Activated CD4-positive, alpha-beta T cell treated with anti-CD3 and anti-CD28 coated beads for 36 hours (primary cell): ENCODE measurements at regions of chr16 and their contacts with region 1.

Region 1: DNA sequence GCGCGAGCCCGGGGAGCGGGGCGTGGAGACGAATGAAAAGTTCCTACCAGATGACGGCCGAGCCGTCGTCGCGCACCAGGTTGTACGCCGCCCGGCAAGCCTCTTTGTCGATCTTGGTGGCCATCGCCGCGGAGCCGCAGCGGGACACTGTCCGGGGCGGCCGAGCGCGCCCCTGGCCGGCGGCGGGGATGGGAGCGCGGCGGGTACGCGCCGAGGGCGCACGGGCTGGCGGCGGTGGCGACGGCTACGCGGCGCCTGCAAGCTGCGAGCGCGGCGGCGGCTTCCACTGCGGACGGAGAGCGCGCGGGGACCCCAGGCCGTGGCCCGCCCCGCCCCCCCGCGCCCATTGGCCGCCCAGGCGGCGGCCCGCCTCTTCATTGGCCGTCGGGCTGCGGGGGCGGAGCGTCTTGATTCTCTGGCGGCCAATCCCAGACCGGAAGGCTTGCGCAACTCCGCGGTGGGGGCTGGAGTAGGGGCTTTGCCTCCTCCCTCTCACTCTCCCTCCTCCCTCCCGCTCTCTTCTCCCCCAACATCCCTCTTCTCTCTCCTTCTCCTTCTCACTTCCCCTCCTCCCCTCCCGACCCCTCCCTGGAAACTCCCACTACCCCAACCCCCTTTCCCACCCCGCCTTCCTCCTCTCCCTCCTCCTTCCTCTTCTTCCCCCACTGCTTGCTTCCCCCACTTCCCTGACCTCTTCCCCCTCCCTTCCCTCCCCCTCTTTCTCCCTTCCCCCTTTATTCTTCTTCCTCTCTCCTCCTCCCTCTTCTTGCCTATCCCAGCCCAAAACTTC is at the start of gene COTL1:
- DNase-seq: peak; percentile 98
- ATAC-seq: peak; percentile 77
- H3K4me3 Mint-ChIP-seq: peak within 1 kb of the TSS; percentile 98
- H3K27ac Mint-ChIP-seq: peak within 1 kb of the TSS; percentile 87
- H3K4me1 Mint-ChIP-seq: peaks cover 41% of the 10 kb centered on the region
- H3K27me3 Mint-ChIP-seq: no peaks in the 10 kb centered on the region
- total RNA-seq, gene COTL1: 353 to 384 TPM

Region 2: DNA sequence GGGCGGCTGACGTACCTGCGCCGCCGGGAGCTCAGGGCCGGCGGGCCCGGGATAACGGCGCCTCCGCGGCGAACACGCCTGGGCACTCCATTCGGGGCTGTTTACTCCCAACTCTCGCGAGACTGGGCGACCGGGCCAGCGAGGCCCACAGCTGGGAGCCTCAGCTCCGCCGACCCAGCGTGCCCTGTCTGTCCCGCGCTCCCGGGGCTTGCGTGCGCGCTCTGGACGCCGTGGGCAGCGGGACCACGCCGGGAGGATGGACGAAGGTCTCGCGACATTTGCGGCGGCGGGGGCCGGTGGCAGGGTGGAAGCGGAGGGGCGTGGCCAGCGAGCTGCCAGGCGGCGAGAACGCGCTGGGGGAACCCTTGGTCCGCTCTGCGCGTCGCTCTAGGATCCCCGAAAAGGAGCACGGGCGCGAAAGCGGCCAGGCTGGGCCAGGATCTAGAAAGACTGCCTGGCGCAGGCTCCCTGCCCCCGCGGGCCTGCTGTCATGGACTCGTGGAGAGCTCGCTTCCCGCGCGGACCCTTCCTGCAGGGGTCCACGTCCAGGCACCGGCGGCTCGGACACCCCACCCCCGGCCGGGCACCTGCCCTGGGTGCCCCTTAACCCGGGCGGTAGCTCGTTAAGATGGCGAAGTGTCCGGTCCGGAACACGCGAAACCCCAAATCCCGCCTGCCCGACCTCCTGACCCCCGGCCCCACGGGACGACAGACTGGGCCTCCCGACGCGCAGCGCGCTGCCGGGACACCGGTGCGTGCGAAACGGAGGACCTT is 501.1 kb before region 1 on chr16 and contains the start of gene MBTPS1:
- CTCF ChIA-PET with region 1: no interaction called
- POLR2A ChIA-PET with region 1: no interaction called
- intact Hi-C with region 1: loop called in 1 of 2 experiments (anchors 5 kb)
- DNase-seq: peak; percentile 99
- ATAC-seq: peak; percentile 93
- H3K4me3 Mint-ChIP-seq: peak within 1 kb of the TSS; percentile 80
- H3K27ac Mint-ChIP-seq: peak within 1 kb of the TSS; percentile 95
- H3K4me1 Mint-ChIP-seq: peaks cover 31% of the 10 kb centered on the region
- H3K27me3 Mint-ChIP-seq: no peaks in the 10 kb centered on the region
- total RNA-seq, gene MBTPS1: 32.0 to 32.2 TPM

Region 3: DNA sequence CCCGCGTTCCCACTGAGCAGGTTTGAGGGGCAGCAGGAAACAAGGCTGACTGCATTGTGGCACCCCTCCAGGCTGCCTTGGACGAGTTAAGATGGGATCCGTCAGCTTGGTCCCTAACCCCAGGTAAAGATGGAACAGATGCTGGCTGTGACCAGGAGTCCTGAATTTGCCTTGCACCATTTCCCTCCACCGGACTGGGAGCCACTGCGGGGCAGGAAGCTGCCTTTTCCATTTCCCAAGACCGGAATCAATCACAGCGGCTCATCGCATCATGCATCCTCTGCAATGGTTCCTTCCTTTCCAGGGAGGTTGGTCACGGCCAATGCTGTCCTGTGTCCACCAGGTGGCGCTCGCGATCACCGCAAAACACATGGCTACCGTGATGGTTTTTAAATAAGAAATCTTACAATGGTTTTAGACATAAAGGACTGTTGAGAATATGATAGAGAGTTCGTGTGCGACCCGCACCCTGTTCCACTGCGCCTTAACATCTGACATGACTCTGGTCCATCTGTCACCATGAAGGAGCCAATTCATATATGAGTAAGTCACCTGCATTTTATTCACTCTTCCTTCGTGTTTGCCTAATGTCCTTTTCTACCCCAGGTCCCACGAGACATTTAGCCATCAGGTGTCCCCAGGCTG is 106.7 kb before region 1 on chr16:
- CTCF ChIA-PET with region 1: interaction called, 76 read pairs
- POLR2A ChIA-PET with region 1: interaction called, 3 read pairs
- intact Hi-C with region 1: loop called (anchors 1 kb)
- DNase-seq: peak; percentile 94
- ATAC-seq: peak; percentile 23
- H3K4me3 Mint-ChIP-seq: no peak overlapping the region
- H3K27ac Mint-ChIP-seq: peak overlapping the region; percentile 26
- H3K4me1 Mint-ChIP-seq: peaks cover 69% of the 10 kb centered on the region
- H3K27me3 Mint-ChIP-seq: no peaks in the 10 kb centered on the region

Region 4: DNA sequence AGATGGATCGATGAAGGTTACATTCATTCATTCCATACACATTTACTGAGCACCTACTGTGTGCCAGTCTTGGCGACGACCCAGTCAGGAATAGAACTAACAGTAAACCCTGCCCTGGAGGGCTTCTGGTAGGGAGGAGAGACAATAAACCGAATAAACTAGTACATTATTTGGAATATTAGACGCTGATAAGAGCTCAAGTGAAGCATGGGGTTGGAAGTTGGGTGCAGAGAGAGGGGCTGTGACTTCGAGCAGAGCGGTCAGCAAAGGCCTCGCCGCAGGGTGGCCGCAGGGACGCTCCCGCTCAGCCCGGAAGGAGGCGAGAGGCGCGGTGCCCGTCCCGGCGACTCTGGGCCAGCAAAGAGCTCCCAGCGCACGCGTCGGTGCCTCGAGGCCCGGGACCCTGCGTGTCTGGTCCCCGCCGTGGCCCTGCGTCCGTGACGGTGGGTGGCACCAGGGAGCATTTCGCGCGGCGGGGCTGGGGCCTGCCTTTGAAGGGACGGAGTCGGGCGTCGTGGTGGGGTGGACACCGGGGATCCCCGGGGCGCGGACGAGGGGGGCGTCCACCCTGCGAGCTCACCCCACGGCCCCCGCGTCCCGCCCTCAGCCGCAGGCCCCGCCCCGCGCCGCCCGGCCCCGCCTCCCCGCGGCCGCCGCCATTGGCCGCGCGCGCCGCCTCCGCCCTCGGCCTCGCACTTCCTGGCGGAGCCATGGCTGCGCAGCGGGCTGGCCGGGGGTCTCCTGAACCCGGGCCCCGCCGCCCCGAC is 30.0 kb after region 1 on chr16 and contains the start of gene KLHL36:
- CTCF ChIA-PET with region 1: interaction called, 15 read pairs
- POLR2A ChIA-PET with region 1: no interaction called
- intact Hi-C with region 1: loop called in 1 of 2 experiments (anchors 2 kb)
- DNase-seq: peak; percentile 79
- ATAC-seq: peak; percentile 85
- H3K4me3 Mint-ChIP-seq: peak within 1 kb of the TSS; percentile 76
- H3K27ac Mint-ChIP-seq: peak within 1 kb of the TSS; percentile 80
- H3K4me1 Mint-ChIP-seq: peaks cover 43% of the 10 kb centered on the region
- H3K27me3 Mint-ChIP-seq: no peaks in the 10 kb centered on the region
- total RNA-seq, gene KLHL36: 31.1 to 43.2 TPM

Region 5: DNA sequence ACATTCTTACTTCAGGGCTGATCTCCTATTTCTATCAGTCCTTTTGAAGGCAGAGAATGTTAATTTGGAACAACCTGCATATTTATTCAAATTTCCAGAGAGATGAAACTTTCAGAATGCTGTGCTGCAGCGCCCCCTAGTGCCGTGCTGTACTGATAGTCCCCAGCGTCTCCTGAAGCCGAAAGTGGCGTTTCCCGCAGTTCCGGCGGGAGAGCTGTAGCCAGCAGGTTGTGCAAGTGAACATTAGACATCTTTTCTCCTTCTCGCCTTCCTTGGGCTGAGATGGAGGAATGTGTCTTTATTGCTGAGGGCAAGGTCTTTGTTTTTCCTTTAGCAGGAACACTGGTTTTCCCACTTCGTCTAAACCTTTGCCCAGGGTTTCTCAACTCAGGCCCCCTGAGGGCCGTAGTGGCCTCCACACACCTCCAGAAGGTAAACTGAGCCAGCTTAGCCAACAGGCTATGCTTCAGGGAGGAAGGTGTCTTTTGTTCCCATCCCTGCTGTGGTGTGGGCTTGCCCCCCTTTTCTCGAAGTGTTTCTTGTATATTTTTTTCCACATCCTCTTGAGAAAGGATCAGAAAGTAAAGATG is 108.2 kb after region 1 on chr16:
- CTCF ChIA-PET with region 1: interaction called, 23 read pairs
- POLR2A ChIA-PET with region 1: no interaction called
- intact Hi-C with region 1: loop called (anchors 1 to 2 kb)
- DNase-seq: peak; percentile 92
- ATAC-seq: peak; percentile 60
- H3K4me3 Mint-ChIP-seq: peak overlapping the region; percentile 48
- H3K27ac Mint-ChIP-seq: peak overlapping the region; percentile 58
- H3K4me1 Mint-ChIP-seq: peaks cover 83% of the 10 kb centered on the region
- H3K27me3 Mint-ChIP-seq: no peaks in the 10 kb centered on the region

Region 6: DNA sequence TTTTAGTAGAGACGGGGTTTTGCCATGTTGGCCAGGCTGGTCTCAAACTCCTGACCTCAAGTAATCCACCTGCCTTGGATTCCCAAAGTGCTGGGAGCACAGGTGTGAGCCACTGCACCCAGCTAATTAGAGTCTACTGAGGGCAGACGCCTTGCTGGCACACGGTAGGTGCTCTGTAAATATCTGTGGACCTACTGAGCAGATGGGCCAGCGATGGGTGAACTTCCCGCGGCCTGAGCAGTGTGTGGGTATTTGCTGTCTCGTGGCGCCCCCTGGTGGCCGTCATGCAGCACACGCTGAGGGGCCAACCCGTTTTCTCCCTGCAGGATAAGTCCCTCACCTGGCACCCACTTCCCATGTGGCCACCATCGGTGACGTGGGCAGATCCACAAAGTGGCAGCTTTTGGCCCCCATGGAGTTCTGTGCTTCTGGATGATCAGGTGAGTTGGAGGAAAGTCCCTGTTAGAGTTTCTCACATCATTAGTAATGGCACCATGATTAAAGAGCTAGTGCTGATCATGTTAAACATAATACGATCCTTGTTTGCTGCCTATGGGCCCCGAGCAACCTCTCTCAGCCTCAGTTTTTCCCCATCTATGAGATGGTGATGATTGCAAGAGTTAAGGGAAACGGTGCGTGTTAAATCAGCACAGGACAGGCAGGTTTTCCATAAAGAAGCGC is 352.6 kb after region 1 on chr16:
- CTCF ChIA-PET with region 1: interaction called, 6 read pairs
- POLR2A ChIA-PET with region 1: no interaction called
- intact Hi-C with region 1: loop called in 1 of 2 experiments (anchors 1 kb)
- DNase-seq: peak; percentile 91
- ATAC-seq: peak; percentile 99
- H3K4me3 Mint-ChIP-seq: no peak overlapping the region
- H3K27ac Mint-ChIP-seq: no peak overlapping the region
- H3K4me1 Mint-ChIP-seq: peaks cover 4% of the 10 kb centered on the region
- H3K27me3 Mint-ChIP-seq: no peaks in the 10 kb centered on the region

Region 7: GRCh38 chr16:85626191-85626981 is 1008.4 kb after region 1 on chr16:
- CTCF ChIA-PET with region 1: no interaction called
- POLR2A ChIA-PET with region 1: no interaction called
- intact Hi-C with region 1: no loop called
- DNase-seq: no peak
- ATAC-seq: no peak
- H3K4me3 Mint-ChIP-seq: no peak overlapping the region
- H3K27ac Mint-ChIP-seq: no peak overlapping the region
- H3K4me1 Mint-ChIP-seq: peaks cover 9% of the 10 kb centered on the region
- H3K27me3 Mint-ChIP-seq: no peaks in the 10 kb centered on the region